CD8-positive, alpha-beta memory T cell (primary cell): ENCODE measurements at regions of chr17 and their contacts with region 1.

Region 1: DNA sequence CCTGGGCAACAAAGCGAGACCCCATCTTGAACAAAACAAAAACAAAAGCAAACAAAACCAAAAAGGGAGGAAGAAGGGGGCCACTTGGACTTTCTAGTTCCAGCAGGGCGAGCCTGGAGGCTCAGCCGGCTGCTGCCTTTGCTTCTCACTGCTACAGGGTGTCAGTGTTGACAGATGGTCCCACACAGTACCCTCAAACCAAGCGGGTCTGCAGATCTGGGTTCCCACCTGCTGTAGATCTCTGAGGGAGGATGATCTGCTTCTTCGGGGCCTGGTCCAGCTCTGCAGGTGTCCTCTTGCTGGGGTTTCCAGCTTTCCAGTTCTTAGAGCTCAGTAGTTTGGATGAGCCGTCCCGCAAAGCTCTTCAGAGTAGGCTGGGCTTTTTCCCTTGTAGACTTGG is 6.7 kb downstream of the CSHL1 start:
- DNase-seq: no peak
- H3K4me3 ChIP-seq: no peak overlapping the region
- H3K4me3 Mint-ChIP-seq: no peak overlapping the region
- H3K27ac ChIP-seq: no peak overlapping the region
- H3K27ac Mint-ChIP-seq: no peak overlapping the region
- H3K4me1 ChIP-seq: no peaks in the 10 kb centered on the region
- H3K4me1 Mint-ChIP-seq: peaks cover 2 to 7% (median 5%) of the 10 kb centered on the region in 3 donors
- H3K27me3 ChIP-seq: no peaks in the 10 kb centered on the region
- H3K27me3 Mint-ChIP-seq: peaks cover 3 to 9% of the 10 kb centered on the region in 2 donors

Region 2: DNA sequence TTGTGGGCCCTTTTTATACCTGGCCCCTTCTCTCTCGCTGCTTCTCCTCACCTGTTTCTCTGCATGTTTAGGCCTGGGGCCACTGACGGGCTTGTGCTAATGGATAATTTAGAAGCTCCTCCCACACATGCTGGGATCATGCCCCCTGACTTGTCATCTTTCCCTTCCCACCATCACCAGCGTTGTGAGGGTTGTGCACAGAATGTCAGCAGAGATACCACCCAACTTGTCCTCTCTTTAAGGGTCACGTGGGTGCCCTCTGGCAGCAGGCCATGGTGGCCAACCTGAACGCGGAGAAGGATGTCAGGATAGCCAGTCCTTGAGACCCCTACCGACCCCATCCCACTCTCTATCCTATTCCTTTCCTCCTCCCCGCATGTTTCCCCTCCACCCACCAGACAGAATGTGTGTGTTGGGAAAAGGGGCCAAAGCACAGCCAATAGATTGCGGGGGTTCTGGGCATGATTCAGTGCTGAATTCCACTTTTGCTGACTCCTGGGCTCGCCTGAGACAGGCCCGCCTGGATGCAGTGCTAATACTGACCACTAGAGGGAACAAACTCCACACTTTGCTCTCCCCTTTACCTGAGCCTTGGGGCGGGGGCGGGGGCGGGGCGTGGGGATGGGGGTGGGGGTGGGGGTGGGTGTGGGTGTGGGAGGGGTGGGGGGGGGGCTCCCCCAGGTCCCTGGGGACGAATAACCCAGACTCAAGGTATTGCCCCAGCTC is 22.3 kb before region 1 on chr17 and contains the start of gene GH2:
- CTCF ChIA-PET with region 1: interaction called, 11 read pairs
- POLR2A ChIA-PET with region 1: no interaction called
- DNase-seq: peak; percentile 37 to 68 (median 43)
- H3K4me3 ChIP-seq: no peak within 1 kb of the TSS
- H3K4me3 Mint-ChIP-seq: no peak within 1 kb of the TSS
- H3K27ac ChIP-seq: no peak within 1 kb of the TSS
- H3K27ac Mint-ChIP-seq: no peak within 1 kb of the TSS
- H3K4me1 ChIP-seq: no peaks in the 10 kb centered on the region
- H3K4me1 Mint-ChIP-seq: peaks cover 0 to 3% (median 0%) of the 10 kb centered on the region in 3 donors
- H3K27me3 ChIP-seq: no peaks in the 10 kb centered on the region
- H3K27me3 Mint-ChIP-seq: peaks cover 1 to 10% of the 10 kb centered on the region in 2 donors
- total RNA-seq, gene GH2: not detected

Region 3: DNA sequence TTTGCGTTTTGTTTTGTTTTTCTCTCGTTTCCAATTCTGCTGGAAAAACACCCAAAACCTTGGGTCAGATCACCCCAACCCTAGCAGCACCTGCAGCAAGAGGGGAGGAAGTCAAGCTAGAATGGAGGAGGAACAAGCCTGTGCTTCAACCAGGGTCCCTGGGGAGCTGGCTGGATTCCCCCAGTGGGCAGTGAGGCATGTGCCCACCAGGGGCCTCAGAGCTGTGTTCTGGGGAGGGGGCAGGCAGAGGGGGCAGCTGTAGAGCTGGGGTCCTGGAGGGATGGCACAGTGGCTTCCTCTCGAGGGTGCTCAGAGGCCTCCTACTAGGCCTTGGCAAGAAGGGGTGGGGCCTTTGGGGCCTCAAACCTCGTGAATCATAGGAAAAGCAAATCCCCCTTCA is 21.3 kb after region 1 on chr17:
- CTCF ChIA-PET with region 1: no interaction called
- POLR2A ChIA-PET with region 1: no interaction called
- DNase-seq: peak in 1 of 5 donors; percentile 38
- H3K4me3 ChIP-seq: no peak overlapping the region
- H3K4me3 Mint-ChIP-seq: no peak overlapping the region
- H3K27ac ChIP-seq: no peak overlapping the region
- H3K27ac Mint-ChIP-seq: peak overlapping the region in 1 of 8 donors; percentile 12
- H3K4me1 ChIP-seq: peaks cover 3% of the 10 kb centered on the region
- H3K4me1 Mint-ChIP-seq: peaks cover under 1 to 2% (median 2%) of the 10 kb centered on the region in 3 donors
- H3K27me3 ChIP-seq: no peaks in the 10 kb centered on the region
- H3K27me3 Mint-ChIP-seq: no peaks in the 10 kb centered on the region

Region 4: GRCh38 chr17:63937334-63937733 is 33.0 kb after region 1 on chr17:
- CTCF ChIA-PET with region 1: no interaction called
- POLR2A ChIA-PET with region 1: no interaction called
- DNase-seq: no peak
- H3K4me3 ChIP-seq: no peak overlapping the region
- H3K4me3 Mint-ChIP-seq: no peak overlapping the region
- H3K27ac ChIP-seq: no peak overlapping the region
- H3K27ac Mint-ChIP-seq: no peak overlapping the region
- H3K4me1 ChIP-seq: peaks cover 7% of the 10 kb centered on the region
- H3K4me1 Mint-ChIP-seq: peaks cover 6 to 17% (median 14%) of the 10 kb centered on the region in 3 donors
- H3K27me3 ChIP-seq: no peaks in the 10 kb centered on the region
- H3K27me3 Mint-ChIP-seq: peaks cover 0 to 3% of the 10 kb centered on the region in 2 donors